CD4-positive, alpha-beta memory T cell (primary cell): ENCODE measurements at regions of chr9 and their contacts with region 1.

Region 1: GRCh38 chr9:36102742-36103495 is 33.6 kb upstream of the GLIPR2 start:
- DNase-seq: peak; percentile 79 to 88 (median 82)
- H3K4me3 ChIP-seq: no peak overlapping the region
- H3K4me3 Mint-ChIP-seq: no peak overlapping the region
- H3K27ac ChIP-seq: no peak overlapping the region
- H3K27ac Mint-ChIP-seq: peak overlapping the region in 4 of 7 donors; percentile 34 to 69 (median 50)
- H3K4me1 ChIP-seq: peaks cover 5% of the 10 kb centered on the region
- H3K4me1 Mint-ChIP-seq: peaks cover 5 to 9% (median 7%) of the 10 kb centered on the region in 4 donors
- H3K27me3 ChIP-seq: no peaks in the 10 kb centered on the region
- H3K27me3 Mint-ChIP-seq: no peaks in the 10 kb centered on the region

Region 2: GRCh38 chr9:36074870-36075532 is 27.9 kb before region 1 on chr9:
- CTCF ChIA-PET with region 1: interaction called, 13 read pairs
- POLR2A ChIA-PET with region 1: no interaction called
- intact Hi-C with region 1: no loop called
- DNase-seq: no peak
- H3K4me3 ChIP-seq: no peak overlapping the region
- H3K4me3 Mint-ChIP-seq: no peak overlapping the region
- H3K27ac ChIP-seq: no peak overlapping the region
- H3K27ac Mint-ChIP-seq: peak overlapping the region in 1 of 7 donors; percentile 5
- H3K4me1 ChIP-seq: no peaks in the 10 kb centered on the region
- H3K4me1 Mint-ChIP-seq: peaks cover 0 to 2% (median 0%) of the 10 kb centered on the region in 4 donors
- H3K27me3 ChIP-seq: no peaks in the 10 kb centered on the region
- H3K27me3 Mint-ChIP-seq: no peaks in the 10 kb centered on the region

Region 3: DNA sequence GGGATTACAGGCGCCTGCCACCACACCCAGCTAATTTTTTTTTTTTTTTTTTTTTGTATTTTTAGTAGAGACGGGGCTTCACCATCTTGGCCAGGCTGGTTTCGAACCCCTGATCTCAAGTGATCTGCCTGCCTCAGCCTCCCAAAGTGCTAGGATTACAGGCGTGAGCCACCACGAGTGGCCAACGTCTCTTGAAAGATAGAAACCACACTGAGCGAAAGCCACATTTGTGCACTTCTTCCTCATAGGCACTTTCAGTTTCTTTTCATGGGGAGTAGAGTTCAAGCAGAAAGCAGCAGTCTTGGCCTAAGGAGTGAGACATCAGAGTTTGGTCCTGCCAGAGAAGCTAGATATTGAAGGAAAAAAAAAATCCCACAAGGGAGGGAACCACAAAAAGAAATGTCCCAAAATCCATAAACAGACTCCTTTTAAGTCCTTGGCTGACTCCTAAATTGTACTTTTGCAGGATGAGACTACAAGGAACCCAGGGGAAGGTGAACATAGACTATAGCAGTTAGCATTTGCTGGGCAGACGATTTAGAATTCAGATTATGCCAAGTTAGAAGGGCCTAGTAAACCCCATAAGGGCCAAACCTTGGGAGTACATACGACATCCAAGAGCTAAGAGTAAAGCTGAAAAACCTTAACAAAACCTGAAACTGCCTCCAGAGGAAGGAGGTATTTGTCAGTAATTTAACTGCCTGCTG is 10.3 kb before region 1 on chr9:
- CTCF ChIA-PET with region 1: interaction called, 25 read pairs
- POLR2A ChIA-PET with region 1: interaction called, 4 read pairs
- intact Hi-C with region 1: no loop called
- DNase-seq: peak; percentile 42 to 58 (median 48)
- H3K4me3 ChIP-seq: no peak overlapping the region
- H3K4me3 Mint-ChIP-seq: peak overlapping the region; percentile 63 to 84 (median 75)
- H3K27ac ChIP-seq: peak overlapping the region; percentile 20
- H3K27ac Mint-ChIP-seq: peak overlapping the region; percentile 79 to 97 (median 94)
- H3K4me1 ChIP-seq: peaks cover 7% of the 10 kb centered on the region
- H3K4me1 Mint-ChIP-seq: peaks cover 11 to 19% (median 16%) of the 10 kb centered on the region in 4 donors
- H3K27me3 ChIP-seq: no peaks in the 10 kb centered on the region
- H3K27me3 Mint-ChIP-seq: no peaks in the 10 kb centered on the region

Region 4: DNA sequence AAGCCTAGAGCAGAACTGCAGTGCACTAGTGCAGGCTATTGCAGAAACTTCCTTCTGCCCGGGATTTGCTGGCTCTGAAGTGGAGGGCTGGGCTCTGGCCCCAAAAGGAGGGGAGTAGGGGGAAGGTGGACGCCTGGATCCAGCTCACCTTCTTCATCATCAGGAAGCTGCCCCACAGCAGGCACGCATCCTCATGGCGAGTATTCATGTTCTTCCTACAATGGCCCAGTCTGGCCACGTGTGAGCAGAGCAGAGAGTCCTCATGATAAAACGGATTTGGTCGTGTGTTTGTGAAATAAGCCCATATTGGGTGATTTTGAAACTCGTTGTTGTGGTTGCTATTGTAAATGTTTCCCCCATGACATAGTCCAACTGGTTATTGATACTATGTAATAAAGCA is 25.4 kb after region 1 on chr9:
- CTCF ChIA-PET with region 1: interaction called, 35 read pairs
- POLR2A ChIA-PET with region 1: no interaction called
- intact Hi-C with region 1: no loop called
- DNase-seq: no peak
- H3K4me3 ChIP-seq: no peak overlapping the region
- H3K4me3 Mint-ChIP-seq: peak overlapping the region in 1 of 8 donors; percentile 5
- H3K27ac ChIP-seq: no peak overlapping the region
- H3K27ac Mint-ChIP-seq: peak overlapping the region in 4 of 7 donors; percentile 47 to 92 (median 67)
- H3K4me1 ChIP-seq: peaks cover 33% of the 10 kb centered on the region
- H3K4me1 Mint-ChIP-seq: peaks cover 16 to 35% (median 27%) of the 10 kb centered on the region in 4 donors
- H3K27me3 ChIP-seq: no peaks in the 10 kb centered on the region
- H3K27me3 Mint-ChIP-seq: no peaks in the 10 kb centered on the region

Region 5: DNA sequence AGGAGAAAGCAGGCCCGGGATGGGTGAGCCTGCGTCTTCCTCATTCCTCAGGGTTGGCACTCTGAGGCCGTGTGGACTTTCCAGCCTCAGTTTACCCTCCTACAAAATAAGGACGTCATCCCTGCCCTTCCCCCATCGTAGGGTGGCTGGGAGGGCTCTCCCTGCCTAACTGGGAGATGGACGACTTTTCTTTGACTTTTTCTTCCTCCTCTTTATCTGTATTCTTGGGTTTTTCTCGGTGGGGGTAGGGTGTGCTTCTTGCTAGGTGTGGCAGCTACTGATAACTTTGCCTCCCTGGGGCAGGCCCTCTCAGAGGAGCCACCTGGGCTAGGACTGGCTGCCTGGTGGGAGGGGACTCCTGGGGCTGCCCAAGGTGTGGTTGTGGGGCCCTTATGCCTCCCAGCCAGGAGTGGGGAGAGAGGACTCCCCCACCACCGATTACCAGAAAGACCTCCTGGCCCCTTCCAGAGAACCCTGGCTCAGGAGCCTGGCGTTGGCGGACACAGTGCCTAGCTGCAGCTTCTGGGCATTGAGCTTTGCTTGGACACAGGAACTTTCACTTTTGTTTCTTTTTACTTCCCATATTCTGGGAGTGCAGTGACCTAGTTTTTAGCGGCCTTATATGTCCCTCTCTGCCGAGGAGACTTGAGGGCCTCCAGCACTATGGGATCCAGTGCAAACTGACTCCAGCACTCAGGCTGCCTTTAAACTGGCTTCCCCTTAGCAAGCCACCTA is 39.8 kb after region 1 on chr9:
- CTCF ChIA-PET with region 1: interaction called, 49 read pairs
- POLR2A ChIA-PET with region 1: interaction called, 11 read pairs
- intact Hi-C with region 1: no loop called
- DNase-seq: no peak
- H3K4me3 ChIP-seq: peak overlapping the region; percentile 50 to 58
- H3K4me3 Mint-ChIP-seq: peak overlapping the region; percentile 88 to 97 (median 92)
- H3K27ac ChIP-seq: peak overlapping the region; percentile 73
- H3K27ac Mint-ChIP-seq: peak overlapping the region; percentile 95 to 100 (median 98)
- H3K4me1 ChIP-seq: peaks cover 100% of the 10 kb centered on the region
- H3K4me1 Mint-ChIP-seq: peaks cover 80 to 100% (median 97%) of the 10 kb centered on the region in 4 donors
- H3K27me3 ChIP-seq: no peaks in the 10 kb centered on the region
- H3K27me3 Mint-ChIP-seq: no peaks in the 10 kb centered on the region

Region 6: GRCh38 chr9:36166101-36166927 is 63.4 kb after region 1 on chr9:
- CTCF ChIA-PET with region 1: interaction called, 648 read pairs
- POLR2A ChIA-PET with region 1: interaction called, 44 read pairs
- intact Hi-C with region 1: loop called (anchors 1 kb)
- DNase-seq: peak; percentile 76 to 86 (median 79)
- H3K4me3 ChIP-seq: peak overlapping the region in 1 of 2 donors; percentile 57
- H3K4me3 Mint-ChIP-seq: peak overlapping the region; percentile 67 to 84 (median 78)
- H3K27ac ChIP-seq: no peak overlapping the region
- H3K27ac Mint-ChIP-seq: peak overlapping the region; percentile 35 to 78 (median 60)
- H3K4me1 ChIP-seq: peaks cover 12% of the 10 kb centered on the region
- H3K4me1 Mint-ChIP-seq: peaks cover 10 to 28% (median 14%) of the 10 kb centered on the region in 4 donors
- H3K27me3 ChIP-seq: no peaks in the 10 kb centered on the region
- H3K27me3 Mint-ChIP-seq: no peaks in the 10 kb centered on the region

Region 7: GRCh38 chr9:36258208-36258988 is 155.5 kb after region 1 on chr9 and contains the start of gene GNE:
- CTCF ChIA-PET with region 1: no interaction called
- POLR2A ChIA-PET with region 1: no interaction called
- intact Hi-C with region 1: loop called (anchors 5 kb)
- DNase-seq: peak; percentile 95 to 98 (median 96)
- H3K4me3 ChIP-seq: peak within 1 kb of the TSS; percentile 62 to 96
- H3K4me3 Mint-ChIP-seq: peak within 1 kb of the TSS; percentile 96 to 100 (median 97)
- H3K27ac ChIP-seq: peak within 1 kb of the TSS; percentile 85
- H3K27ac Mint-ChIP-seq: peak within 1 kb of the TSS; percentile 96 to 99 (median 98)
- H3K4me1 ChIP-seq: peaks cover 16% of the 10 kb centered on the region
- H3K4me1 Mint-ChIP-seq: peaks cover 7 to 19% (median 11%) of the 10 kb centered on the region in 4 donors
- H3K27me3 ChIP-seq: no peaks in the 10 kb centered on the region
- H3K27me3 Mint-ChIP-seq: no peaks in the 10 kb centered on the region
- total RNA-seq, gene GNE: 16.9 to 18.1 TPM

Region 8: GRCh38 chr9:36637491-36638270 is 534.8 kb after region 1 on chr9:
- CTCF ChIA-PET with region 1: no interaction called
- POLR2A ChIA-PET with region 1: no interaction called
- intact Hi-C with region 1: no loop called
- DNase-seq: no peak
- H3K4me3 ChIP-seq: no peak overlapping the region
- H3K4me3 Mint-ChIP-seq: no peak overlapping the region
- H3K27ac ChIP-seq: no peak overlapping the region
- H3K27ac Mint-ChIP-seq: no peak overlapping the region
- H3K4me1 ChIP-seq: no peaks in the 10 kb centered on the region
- H3K4me1 Mint-ChIP-seq: peaks cover 0 to 3% (median 1%) of the 10 kb centered on the region in 4 donors
- H3K27me3 ChIP-seq: no peaks in the 10 kb centered on the region
- H3K27me3 Mint-ChIP-seq: no peaks in the 10 kb centered on the region